Activated naive CD4-positive, alpha-beta T cell treated with anti-CD3 and anti-CD28 coated beads for 36 hours (primary cell): ENCODE measurements at regions of chr1 and their contacts with region 1.

Region 1: DNA sequence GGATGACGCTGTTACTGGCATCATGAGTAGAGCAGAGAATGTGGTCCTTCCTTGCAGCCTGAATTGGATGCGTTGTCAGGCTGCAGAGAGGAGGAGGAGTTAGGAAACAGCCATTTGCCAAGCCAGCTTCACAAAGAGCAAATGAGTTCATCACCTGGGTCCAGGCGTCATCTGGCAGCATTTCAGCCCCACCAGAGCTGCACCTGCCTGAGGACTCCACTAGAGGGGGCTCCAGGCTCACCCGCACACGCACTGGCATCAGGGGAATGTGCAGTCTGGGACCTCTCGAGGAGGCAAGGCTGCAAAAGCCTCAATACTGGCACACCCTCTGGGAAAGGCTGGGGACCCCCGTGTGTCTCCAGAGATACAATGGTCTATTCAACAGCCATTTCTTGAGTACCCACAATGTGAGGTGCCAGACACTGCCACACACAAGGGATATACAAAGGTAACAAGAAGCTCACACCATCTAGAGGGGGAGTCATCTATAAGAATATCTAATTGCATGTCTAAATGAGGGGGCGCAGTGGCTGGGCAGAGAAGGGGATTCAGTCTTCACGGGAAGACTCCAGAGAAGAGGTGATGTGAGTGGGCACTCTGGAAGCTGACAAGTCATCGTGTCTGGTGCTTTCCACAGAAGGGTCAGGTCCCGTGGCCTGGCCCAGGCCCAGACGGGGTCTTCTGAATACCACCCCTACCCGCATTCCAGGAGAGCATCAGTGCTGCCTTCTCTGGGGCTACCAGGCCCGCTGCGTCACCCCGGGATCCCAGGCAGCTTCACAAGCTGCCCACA is 53.5 kb upstream of the CNTN2 start:
- DNase-seq: peak; percentile 82
- H3K4me3 Mint-ChIP-seq: no peak overlapping the region
- H3K27ac Mint-ChIP-seq: no peak overlapping the region
- H3K4me1 Mint-ChIP-seq: peaks cover 12% of the 10 kb centered on the region
- H3K27me3 Mint-ChIP-seq: no peaks in the 10 kb centered on the region

Region 2: GRCh38 chr1:204975570-204976235 is 13.8 kb before region 1 on chr1:
- CTCF ChIA-PET with region 1: interaction called, 28 read pairs
- intact Hi-C with region 1: no loop called
- DNase-seq: peak; percentile 74
- H3K4me3 Mint-ChIP-seq: no peak overlapping the region
- H3K27ac Mint-ChIP-seq: no peak overlapping the region
- H3K4me1 Mint-ChIP-seq: no peaks in the 10 kb centered on the region
- H3K27me3 Mint-ChIP-seq: peaks cover 2% of the 10 kb centered on the region

Region 3: DNA sequence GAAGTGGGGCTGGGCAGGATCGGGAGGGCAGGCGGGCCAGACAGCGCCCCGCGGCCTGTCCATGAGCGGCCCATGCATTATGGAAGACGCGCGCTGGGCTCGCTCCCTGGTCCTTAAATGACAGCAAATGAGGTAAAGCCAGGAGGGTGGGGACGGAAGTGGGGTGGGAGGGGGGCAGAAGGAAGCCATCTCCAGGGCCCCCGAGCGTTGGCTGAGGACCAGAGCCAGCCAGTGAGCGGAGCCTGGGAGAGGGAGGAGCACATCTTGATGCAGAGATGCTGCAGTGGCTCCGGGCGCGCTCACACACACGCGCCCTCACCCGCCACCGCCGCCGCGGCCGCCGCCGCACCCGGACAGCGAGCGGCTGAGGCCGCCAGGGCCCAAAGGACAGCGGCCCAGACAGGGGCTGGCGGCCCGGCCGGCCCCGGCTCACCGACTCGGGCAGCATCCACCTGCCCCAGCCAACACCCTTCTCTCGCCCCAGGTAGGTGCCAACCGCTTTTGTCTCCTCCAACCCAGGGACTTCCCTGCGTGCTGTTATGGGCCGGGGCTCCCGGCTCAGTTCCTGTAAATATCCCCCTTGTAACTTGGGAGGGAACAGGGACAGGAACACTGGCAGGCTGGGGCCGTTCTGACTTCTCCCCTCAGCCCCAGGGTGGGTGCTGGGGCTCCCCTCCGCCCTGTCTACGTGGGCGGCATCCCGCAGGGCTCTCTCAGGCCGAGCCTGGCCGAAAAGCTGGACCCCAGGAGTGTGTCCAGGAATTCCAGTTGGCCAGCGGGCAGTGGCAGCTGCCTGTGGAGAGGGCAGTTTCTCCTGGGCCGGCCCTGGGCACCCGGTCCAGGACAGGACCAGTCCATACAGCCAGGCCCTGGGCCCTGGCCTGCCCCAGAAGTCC is 53.7 kb after region 1 on chr1 and contains the start of gene CNTN2:
- CTCF ChIA-PET with region 1: no interaction called
- intact Hi-C with region 1: no loop called
- DNase-seq: no peak
- H3K4me3 Mint-ChIP-seq: no peak within 1 kb of the TSS
- H3K27ac Mint-ChIP-seq: no peak within 1 kb of the TSS
- H3K4me1 Mint-ChIP-seq: no peaks in the 10 kb centered on the region
- H3K27me3 Mint-ChIP-seq: peaks cover 58% of the 10 kb centered on the region
- total RNA-seq, gene CNTN2: not detected

Region 4: DNA sequence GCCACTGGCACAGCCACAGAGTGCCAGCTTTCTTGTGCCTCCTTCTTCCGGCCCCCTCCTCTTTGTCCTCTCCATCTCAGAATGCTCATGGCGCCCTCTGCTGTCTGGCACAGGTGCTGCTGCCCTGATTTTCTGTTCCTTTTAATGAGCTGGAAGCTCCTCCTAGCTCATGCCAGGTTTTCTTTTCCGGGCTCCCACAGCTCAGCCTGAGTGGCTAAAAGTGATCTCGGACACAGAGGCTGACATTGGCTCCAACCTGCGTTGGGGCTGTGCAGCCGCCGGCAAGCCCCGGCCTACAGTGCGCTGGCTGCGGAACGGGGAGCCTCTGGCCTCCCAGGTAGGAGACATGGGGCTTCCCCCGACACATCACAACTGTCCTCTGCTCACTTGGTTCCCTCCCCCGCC is 72.2 kb after region 1 on chr1:
- CTCF ChIA-PET with region 1: interaction called, 116 read pairs
- intact Hi-C with region 1: loop called (anchors 1 kb)
- DNase-seq: peak; percentile 90
- H3K4me3 Mint-ChIP-seq: no peak overlapping the region
- H3K27ac Mint-ChIP-seq: no peak overlapping the region
- H3K4me1 Mint-ChIP-seq: peaks cover 2% of the 10 kb centered on the region
- H3K27me3 Mint-ChIP-seq: no peaks in the 10 kb centered on the region

Region 5: GRCh38 chr1:205141236-205142101 is 152.0 kb after region 1 on chr1:
- CTCF ChIA-PET with region 1: interaction called, 10 read pairs
- intact Hi-C with region 1: loop called (anchors 1 kb)
- DNase-seq: peak; percentile 92
- H3K4me3 Mint-ChIP-seq: no peak overlapping the region
- H3K27ac Mint-ChIP-seq: no peak overlapping the region
- H3K4me1 Mint-ChIP-seq: peaks cover 7% of the 10 kb centered on the region
- H3K27me3 Mint-ChIP-seq: no peaks in the 10 kb centered on the region

Region 6: DNA sequence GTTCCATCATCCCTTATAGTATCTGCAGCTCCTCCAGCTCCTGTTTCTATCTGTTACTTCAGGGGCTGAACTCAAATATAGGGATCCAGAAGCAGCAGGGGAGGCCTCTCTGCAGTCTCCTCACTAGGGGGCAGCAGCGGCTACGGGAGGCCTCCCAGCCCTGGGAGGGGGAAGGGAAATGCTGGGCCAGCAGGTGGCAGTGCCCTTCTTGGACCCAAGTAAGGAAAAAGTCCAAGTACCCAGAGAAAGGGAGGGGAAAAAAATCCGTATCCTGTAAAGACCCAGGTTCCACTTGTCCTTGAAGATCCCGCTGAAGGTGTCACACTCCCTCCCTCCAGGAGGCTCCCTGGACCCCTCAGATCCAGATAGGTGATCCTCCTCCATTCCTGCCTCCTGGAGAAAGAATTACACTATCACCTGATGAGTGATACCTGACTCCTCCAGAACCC is 346.2 kb after region 1 on chr1:
- CTCF ChIA-PET with region 1: no interaction called
- intact Hi-C with region 1: loop called (anchors 5 kb)
- DNase-seq: peak; percentile 92
- H3K4me3 Mint-ChIP-seq: no peak overlapping the region
- H3K27ac Mint-ChIP-seq: no peak overlapping the region
- H3K4me1 Mint-ChIP-seq: no peaks in the 10 kb centered on the region
- H3K27me3 Mint-ChIP-seq: no peaks in the 10 kb centered on the region